ENCODE measurements at regions of chr4 and their contacts with region 1.

Region 1: DNA sequence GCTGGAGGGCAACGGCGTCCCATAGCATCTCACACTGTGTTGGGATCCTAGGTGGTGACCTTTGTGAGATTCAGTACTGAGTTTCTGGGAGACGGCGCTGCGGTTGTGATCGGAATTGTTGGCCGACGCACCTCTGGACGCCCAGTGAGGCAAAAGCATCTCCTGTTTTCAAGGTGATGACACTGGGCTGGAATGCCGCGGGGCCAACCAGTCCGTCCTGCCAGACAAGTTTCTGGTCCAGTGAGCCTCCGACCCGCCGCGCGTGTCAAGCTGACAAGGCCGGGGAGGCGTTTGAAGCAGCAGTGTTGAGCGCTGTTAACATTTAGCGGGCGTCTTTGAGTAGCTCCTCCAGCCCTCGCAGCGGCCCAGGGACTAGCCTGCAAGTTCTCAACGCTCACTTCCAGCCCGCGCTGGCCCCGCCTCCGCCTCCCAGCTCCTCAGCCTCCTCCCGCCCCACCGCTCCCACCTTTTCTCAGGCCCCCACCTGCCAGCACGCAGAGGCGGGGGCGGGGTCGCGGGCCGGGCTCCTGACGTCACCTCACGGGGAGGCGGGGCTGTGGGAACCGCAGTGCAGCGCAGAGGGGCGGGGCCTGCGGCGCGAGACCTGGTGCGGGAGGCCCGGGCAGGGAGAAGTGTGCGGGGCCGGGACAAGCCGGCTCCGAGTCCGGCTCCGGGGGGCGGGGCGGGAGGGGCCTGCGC is 476 bp upstream of the CDS1 start:
- DNase-seq: peak; percentile 74 to 83
- ATAC-seq: peak; percentile 89 to 96 (median 94)
- H3K4me3 ChIP-seq: peak overlapping the region; percentile 68 to 95 (median 76)
- H3K27ac ChIP-seq: peak overlapping the region in 8 of 10 donors; percentile 11 to 78 (median 46)
- H3K4me1 ChIP-seq: peaks cover 0 to 19% (median 14%) of the 10 kb centered on the region in 9 donors
- H3K27me3 ChIP-seq: peaks cover 0 to 73% (median 29%) of the 10 kb centered on the region in 7 donors
- CTCF ChIP-seq: no peak

Region 2: DNA sequence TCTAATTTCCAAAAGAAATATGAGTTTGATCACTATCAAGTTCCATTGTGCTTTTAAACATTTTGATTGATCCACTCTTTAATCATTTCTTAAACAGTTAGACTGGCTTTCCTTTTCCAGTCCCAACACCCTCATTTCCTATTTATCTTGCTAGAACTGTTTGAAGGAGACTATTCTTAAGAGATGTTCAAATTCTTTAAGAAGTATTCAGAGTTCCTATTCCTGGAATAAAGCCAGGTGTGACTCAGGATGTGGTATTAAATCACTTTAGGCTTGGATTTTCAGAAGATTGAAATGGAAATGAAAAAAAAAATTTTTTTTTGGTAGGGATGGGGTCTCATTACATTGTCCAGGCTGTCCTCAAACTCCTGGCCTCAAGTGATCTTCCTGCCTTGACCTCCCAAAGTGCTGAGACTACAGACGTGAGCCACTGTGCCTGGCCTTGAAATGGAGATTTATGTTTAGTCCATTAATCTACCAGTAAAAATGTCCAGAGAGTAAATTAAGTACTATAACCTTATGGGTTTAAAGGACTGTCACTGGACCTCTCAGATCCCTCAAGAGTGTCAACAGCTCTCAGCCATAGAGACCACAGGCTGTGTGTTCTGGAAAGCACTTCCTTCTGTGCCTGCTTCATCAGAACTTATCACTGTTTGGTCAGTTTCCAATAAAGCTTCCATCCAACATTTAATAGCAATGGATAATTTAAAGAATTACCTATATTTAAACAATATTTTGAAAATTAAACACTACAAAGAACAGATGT is 91.2 kb after region 1 on chr4:
- intact Hi-C with region 1: loop called in 1 of 10 experiments (anchors 5 kb)
- DNase-seq: no peak
- ATAC-seq: no peak
- H3K4me3 ChIP-seq: no peak overlapping the region
- H3K27ac ChIP-seq: no peak overlapping the region
- H3K4me1 ChIP-seq: peaks cover 0 to 9% (median 0%) of the 10 kb centered on the region in 9 donors
- H3K27me3 ChIP-seq: no peaks in the 10 kb centered on the region
- CTCF ChIP-seq: no peak

Region 3: GRCh38 chr4:84681486-84682274 is 99.2 kb after region 1 on chr4:
- intact Hi-C with region 1: loop called in 1 of 10 experiments (anchors 5 kb)
- DNase-seq: peak in 1 of 2 donors; percentile 19
- ATAC-seq: peak; percentile 79 to 92 (median 87)
- H3K4me3 ChIP-seq: no peak overlapping the region
- H3K27ac ChIP-seq: peak overlapping the region in 7 of 10 donors; percentile 25 to 78 (median 42)
- H3K4me1 ChIP-seq: peaks cover 4 to 31% (median 22%) of the 10 kb centered on the region in 9 donors
- H3K27me3 ChIP-seq: no peaks in the 10 kb centered on the region
- CTCF ChIP-seq: peak in 3 of 9 donors; percentile 24 to 31 (median 25)